MCF 10A (cell line): ENCODE measurements at regions of chr11 and their contacts with region 1.

Region 1: GRCh38 chr11:19712281-19713220 is at the start of gene NAV2:
- DNase-seq: peak; percentile 94
- H3K4me3 Mint-ChIP-seq: peak within 1 kb of the TSS; percentile 85
- H3K27ac Mint-ChIP-seq: peak within 1 kb of the TSS; percentile 94
- H3K4me1 Mint-ChIP-seq: peaks cover 34% of the 10 kb centered on the region
- H3K27me3 Mint-ChIP-seq: no peaks in the 10 kb centered on the region
- CTCF ChIP-seq: no peak
- total RNA-seq, gene NAV2: 116 and 139 TPM in 2 replicates

Region 2: DNA sequence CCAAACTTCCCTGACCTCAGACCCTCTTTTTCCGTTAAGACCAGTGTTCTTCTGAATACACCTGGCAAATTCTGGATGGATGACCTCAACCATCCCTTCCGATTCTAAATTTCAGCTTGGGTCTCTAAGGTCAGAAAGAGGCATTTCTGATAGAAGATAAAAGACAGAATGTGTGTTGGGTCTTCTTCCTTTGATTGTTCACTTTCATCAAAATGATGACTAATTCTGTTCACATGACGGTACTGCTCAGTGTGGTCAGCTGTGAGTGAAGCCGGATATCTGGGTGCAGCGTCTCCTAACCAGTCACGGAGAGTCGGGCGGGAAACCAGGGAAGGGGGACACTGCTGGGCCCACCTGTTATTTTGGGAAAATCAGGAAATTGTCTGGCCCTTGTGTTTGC is 151.5 kb before region 1 on chr11:
- CTCF ChIA-PET with region 1: interaction called, 28 read pairs
- POLR2A ChIA-PET with region 1: interaction called, 4 read pairs
- intact Hi-C with region 1: loop called (anchors 1 kb)
- DNase-seq: peak; percentile 38
- H3K4me3 Mint-ChIP-seq: no peak overlapping the region
- H3K27ac Mint-ChIP-seq: no peak overlapping the region
- H3K4me1 Mint-ChIP-seq: peaks cover 6% of the 10 kb centered on the region
- H3K27me3 Mint-ChIP-seq: peaks cover 5% of the 10 kb centered on the region
- CTCF ChIP-seq: no peak

Region 3: GRCh38 chr11:19628018-19628417 is 84.5 kb before region 1 on chr11:
- CTCF ChIA-PET with region 1: no interaction called
- POLR2A ChIA-PET with region 1: interaction called, 8 read pairs
- intact Hi-C with region 1: loop called (anchors 1 kb)
- DNase-seq: peak; percentile 99
- H3K4me3 Mint-ChIP-seq: peak overlapping the region; percentile 3
- H3K27ac Mint-ChIP-seq: peak overlapping the region; percentile 78
- H3K4me1 Mint-ChIP-seq: peaks cover 49% of the 10 kb centered on the region
- H3K27me3 Mint-ChIP-seq: no peaks in the 10 kb centered on the region
- CTCF ChIP-seq: no peak

Region 4: DNA sequence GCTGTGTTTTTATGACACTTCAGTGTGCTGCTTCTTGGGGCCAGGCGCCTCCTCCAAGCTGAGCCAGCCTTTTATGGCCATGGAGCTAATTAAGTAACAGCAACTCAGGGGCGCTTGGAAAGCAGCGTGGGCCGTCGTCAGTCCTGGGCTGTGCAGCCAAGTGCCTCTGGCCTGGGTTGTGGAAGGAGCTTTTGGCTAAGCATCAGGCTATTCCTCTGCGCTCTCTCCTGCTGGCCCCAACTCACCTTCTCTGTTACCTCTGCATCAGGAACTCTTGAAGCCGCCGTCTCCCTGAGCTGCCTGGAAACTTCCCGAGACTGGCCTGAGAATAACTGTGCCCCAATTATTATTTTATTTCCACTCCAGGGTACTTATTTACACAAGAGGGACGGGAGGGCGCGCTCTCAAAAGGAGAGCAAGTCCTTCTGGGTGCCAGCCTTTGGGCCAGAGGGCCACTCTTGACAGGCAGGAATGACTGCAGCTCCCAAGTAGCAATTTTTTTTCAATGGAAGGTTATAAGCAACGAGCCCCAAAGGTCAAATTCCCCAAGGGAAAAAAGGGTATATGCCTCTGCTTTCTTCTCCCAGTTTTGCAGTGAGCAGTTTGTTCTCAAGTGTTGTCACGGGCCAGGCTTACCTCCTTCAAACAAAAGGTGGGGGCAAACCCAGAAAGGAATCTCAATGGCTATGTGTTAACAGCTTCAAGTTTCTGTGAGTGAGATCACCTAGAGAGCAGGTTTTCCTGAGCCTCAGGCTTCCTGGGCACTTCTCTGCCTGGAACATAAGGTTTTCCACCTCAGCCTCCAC is 38.4 kb before region 1 on chr11:
- CTCF ChIA-PET with region 1: interaction called, 3 read pairs
- POLR2A ChIA-PET with region 1: interaction called, 13 read pairs
- intact Hi-C with region 1: loop called (anchors 5 kb)
- DNase-seq: no peak
- H3K4me3 Mint-ChIP-seq: no peak overlapping the region
- H3K27ac Mint-ChIP-seq: no peak overlapping the region
- H3K4me1 Mint-ChIP-seq: peaks cover 14% of the 10 kb centered on the region
- H3K27me3 Mint-ChIP-seq: no peaks in the 10 kb centered on the region
- CTCF ChIP-seq: no peak

Region 5: DNA sequence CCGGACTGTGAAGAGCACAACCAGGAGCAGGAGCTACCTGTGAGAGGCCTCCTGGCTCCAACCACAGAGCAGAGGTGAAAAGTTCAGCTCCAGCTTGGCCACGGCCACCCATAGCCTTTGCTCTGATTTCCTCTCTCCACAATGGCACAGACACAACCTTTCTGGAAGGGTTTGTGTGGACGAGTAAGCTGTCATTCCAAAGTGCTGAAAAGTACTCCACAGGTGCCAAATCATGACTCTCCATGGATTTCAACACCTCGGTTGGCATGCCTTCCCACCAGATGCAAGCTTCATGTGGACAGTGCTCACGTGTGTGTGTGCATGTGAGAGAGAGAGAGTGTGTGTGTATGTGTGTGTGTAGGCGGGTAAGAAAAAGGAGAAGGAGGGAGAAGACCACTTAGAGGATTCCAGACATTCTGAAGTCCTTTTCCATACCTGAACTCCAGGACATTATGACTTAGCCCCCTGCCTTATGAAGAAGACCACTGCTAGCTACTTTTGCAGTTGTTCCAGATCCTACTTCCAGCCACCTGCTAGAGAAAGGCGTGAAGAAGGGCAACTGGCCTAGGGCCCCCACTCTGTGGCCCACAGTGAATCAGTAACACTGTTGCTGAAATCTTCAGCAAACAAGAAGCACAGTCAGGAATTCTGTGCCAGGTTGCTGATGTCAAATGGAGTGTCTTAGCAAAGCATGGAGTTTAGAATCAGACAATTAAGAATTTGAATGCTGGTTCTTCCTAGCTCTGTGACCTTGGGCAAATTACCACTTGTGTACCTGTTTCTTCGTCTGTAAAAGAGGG is 13.9 kb before region 1 on chr11:
- CTCF ChIA-PET with region 1: interaction called, 5 read pairs
- POLR2A ChIA-PET with region 1: interaction called, 22 read pairs
- intact Hi-C with region 1: loop called (anchors 1 kb)
- DNase-seq: peak; percentile 98
- H3K4me3 Mint-ChIP-seq: no peak overlapping the region
- H3K27ac Mint-ChIP-seq: peak overlapping the region; percentile 21
- H3K4me1 Mint-ChIP-seq: peaks cover 27% of the 10 kb centered on the region
- H3K27me3 Mint-ChIP-seq: no peaks in the 10 kb centered on the region
- CTCF ChIP-seq: no peak